BJ (cell line): ENCODE measurements at regions of chr11 and their contacts with region 1.

Region 1: GRCh38 chr11:1581976-1582375 is 3.1 kb downstream of the KRTAP5-1 start:
- DNase-seq: no peak
- H3K4me3 ChIP-seq: no peak overlapping the region
- H3K27me3 ChIP-seq: peaks cover 5% of the 10 kb centered on the region
- CTCF ChIP-seq: no peak

Region 2: DNA sequence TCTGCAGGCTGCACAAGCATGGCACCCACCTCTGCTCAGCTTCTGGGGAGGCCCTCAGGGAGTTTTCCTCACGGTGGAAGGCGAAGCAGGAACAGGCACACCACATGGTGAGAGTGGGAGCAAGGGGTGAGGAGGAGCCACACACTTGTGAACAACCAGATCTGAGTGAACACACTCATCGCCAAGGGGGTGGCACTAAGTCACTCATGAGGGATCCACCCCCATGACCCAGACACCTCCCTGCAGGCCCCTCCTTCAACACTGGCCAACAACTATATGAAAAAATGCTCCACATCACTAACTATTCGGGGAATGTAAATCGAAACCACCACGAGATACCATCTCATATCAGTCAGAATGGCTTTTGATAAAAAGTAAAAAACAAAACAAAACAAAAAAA is 16.8 kb after region 1 on chr11:
- CTCF ChIA-PET with region 1: interaction called, 22 read pairs
- POLR2A ChIA-PET with region 1: interaction called, 3 read pairs
- DNase-seq: no peak
- H3K4me3 ChIP-seq: no peak overlapping the region
- H3K27me3 ChIP-seq: peaks cover 16% of the 10 kb centered on the region
- CTCF ChIP-seq: no peak